Activated B cell treated with CpG ODN at 0.5 μM for 24 hours (primary cell): ENCODE measurements at regions of chr12 and their contacts with region 1.

Region 1: DNA sequence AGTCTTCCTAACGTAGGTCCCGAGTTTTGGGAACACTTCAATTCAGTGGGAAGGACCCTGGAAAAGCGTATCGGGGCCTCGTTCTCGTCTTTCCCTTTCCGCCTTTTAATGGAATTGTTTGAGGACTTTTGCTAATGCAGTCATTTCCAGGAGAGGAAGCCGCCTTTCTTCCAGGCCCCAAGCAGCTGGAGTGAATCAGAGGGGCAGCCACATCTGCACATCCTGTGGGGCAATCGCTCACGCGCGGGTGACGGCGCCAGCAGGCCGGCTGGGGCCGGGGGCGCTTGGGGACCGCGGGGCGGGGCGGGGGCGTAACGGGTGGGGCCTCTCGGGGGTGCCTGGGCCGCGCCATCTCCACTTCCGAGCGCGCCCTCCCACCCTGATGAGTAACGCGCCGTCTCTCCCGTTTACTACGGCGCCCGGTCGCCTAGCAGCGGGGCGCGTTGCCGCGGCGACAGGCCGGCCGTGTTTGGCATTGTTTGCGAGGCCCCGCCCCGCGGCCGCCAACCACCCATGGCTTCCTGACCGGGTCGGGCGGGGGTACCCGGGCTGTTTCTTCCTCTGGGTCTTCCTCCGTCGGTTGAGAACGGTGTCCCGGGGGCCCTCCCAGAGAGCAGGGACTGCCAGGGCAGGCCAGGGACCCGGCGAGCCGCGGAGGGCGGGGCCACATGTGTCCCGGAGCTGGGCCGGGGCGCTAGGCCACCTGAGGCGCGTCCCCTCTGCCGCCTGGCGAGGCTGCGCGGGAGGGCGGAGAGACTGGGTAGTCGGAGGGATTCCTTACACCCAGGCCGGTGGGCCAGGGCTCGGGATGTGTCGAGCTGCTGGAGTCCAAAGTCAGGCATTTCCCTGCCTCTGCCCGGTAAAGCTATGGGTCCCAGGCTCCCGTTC is 2.3 kb downstream of the GSG1 start:
- DNase-seq: peak; percentile 94
- ATAC-seq: peak; percentile 79
- H3K4me3 Mint-ChIP-seq: peak overlapping the region; percentile 83
- H3K27ac Mint-ChIP-seq: peak overlapping the region; percentile 96
- H3K4me1 Mint-ChIP-seq: peaks cover 63% of the 10 kb centered on the region
- H3K27me3 Mint-ChIP-seq: no peaks in the 10 kb centered on the region
- CTCF ChIP-seq: no peak

Region 2: DNA sequence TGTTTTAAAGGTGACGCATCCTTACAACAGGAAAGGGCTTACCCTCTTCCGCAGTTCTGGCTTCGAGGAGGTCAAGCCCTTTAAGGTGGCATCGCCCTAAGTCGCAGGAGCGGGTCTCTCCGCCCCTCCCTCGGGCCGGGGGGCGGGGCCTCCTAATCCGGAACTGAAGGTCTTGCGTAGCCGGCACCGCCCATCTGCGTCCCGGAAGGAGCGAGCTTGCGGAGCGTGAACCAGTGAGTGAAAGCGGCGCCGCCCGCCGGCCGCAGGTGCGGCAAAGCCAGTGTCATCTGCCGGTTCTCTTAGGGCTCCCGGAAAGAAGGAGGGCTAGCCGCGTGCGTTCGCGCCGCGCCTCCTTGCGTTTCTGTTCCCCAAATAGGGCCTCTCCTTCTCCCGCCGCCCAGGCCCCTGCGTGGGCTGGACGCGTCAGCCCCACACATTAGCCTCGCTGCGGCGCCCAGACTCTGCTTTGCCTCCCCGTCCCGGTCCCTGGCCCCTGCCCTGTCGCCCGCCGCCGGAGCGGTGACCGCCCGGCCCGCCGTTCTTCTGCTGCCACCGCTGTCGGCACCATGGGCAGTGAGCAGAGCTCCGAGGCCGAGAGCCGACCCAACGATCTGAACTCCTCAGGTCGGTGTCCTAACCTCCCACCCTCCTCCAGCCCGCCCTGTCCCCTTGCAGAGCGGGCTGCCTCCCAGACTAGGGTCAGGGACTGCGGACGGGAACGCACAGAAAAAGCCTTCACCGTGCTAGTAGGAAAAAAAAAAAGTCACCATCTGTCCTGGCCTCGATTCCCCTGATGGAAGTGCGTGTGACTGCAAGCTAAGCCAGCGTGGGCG is 744.0 kb before region 1 on chr12 and contains the start of gene BORCS5:
- CTCF ChIA-PET with region 1: no interaction called
- POLR2A ChIA-PET with region 1: no interaction called
- intact Hi-C with region 1: loop called (anchors 1 kb)
- DNase-seq: peak; percentile 99
- ATAC-seq: peak; percentile 90
- H3K4me3 Mint-ChIP-seq: peak within 1 kb of the TSS; percentile 92
- H3K27ac Mint-ChIP-seq: peak within 1 kb of the TSS; percentile 98
- H3K4me1 Mint-ChIP-seq: peaks cover 38% of the 10 kb centered on the region
- H3K27me3 Mint-ChIP-seq: no peaks in the 10 kb centered on the region
- CTCF ChIP-seq: no peak
- total RNA-seq, gene BORCS5: 19.5 and 22.7 TPM in 2 replicates

Region 3: DNA sequence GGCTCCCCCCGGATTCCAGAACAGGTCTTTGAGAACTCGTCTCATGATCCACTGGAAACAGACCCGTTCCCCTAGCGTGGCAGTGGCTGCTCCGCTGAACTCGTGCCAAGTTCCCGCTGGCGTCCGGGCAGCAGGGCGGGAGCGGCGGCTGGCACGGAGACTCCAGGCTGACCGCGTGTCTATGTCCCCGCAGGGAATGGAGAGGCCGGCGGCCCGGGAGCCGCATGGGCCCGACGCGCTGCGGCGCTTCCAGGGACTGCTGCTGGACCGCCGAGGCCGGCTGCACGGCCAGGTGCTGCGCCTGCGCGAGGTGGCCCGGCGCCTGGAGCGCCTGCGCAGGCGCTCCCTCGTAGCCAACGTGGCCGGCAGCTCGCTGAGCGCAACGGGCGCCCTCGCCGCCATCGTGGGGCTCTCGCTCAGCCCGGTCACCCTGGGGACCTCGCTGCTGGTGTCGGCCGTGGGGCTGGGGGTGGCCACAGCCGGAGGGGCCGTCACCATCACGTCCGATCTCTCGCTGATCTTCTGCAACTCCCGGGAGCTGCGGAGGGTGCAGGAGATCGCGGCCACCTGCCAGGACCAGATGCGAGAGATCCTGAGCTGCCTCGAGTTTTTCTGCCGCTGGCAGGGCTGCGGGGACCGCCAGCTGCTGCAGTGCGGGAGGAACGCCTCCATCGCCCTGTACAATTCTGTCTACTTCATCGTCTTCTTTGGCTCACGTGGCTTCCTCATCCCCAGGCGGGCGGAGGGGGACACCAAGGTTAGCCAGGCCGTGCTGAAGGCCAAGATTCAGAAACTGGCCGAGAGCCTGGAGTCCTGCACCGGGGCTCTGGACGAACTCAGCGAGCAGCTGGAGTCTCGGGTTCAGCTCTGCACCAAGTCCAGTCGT is 314.2 kb before region 1 on chr12:
- CTCF ChIA-PET with region 1: no interaction called
- POLR2A ChIA-PET with region 1: no interaction called
- intact Hi-C with region 1: loop called (anchors 1 kb)
- DNase-seq: peak; percentile 73
- ATAC-seq: peak; percentile 92
- H3K4me3 Mint-ChIP-seq: peak overlapping the region; percentile 87
- H3K27ac Mint-ChIP-seq: peak overlapping the region; percentile 86
- H3K4me1 Mint-ChIP-seq: peaks cover 23% of the 10 kb centered on the region
- H3K27me3 Mint-ChIP-seq: no peaks in the 10 kb centered on the region
- CTCF ChIP-seq: no peak

Region 4: DNA sequence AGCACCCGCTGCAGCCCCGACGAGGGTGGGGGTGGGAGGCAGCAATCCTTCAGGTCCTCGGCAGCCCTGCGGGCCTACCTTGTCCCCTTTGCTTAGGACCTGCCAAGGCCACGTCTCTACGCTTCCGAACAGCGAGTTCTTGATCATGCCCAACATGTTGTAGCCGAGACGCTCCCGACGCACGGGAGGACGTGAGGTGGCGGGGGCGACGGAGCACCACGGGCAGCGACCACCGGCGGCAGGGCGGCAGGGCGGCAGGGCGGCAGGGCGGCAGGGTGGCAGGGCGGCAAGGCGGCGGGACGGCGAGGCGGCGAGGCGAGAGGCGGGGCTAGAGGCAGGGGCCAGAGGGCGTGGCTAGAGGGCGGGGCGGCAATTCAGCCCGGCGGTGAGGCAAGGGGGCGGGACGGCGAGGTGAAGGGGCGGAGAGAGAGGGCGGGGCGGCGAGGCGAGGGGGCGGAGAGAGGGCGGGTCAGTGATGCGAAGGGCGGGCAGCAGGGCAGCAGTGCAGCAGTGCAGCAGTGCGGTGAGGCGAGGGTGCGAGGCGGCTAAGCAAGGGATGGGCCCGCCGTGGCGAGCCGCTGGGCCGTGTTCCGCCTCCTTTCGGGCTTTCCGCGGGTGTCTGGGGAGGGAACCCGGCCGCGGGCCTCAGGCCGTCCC is 101.0 kb before region 1 on chr12 and contains the start of gene HEBP1:
- CTCF ChIA-PET with region 1: no interaction called
- POLR2A ChIA-PET with region 1: no interaction called
- intact Hi-C with region 1: loop called (anchors 1 kb)
- DNase-seq: peak; percentile 97
- ATAC-seq: peak; percentile 92
- H3K4me3 Mint-ChIP-seq: peak within 1 kb of the TSS; percentile 87
- H3K27ac Mint-ChIP-seq: peak within 1 kb of the TSS; percentile 84
- H3K4me1 Mint-ChIP-seq: peaks cover 27% of the 10 kb centered on the region
- H3K27me3 Mint-ChIP-seq: no peaks in the 10 kb centered on the region
- CTCF ChIP-seq: no peak
- total RNA-seq, gene HEBP1: 9.7 and 12.0 TPM in 2 replicates

Region 5: DNA sequence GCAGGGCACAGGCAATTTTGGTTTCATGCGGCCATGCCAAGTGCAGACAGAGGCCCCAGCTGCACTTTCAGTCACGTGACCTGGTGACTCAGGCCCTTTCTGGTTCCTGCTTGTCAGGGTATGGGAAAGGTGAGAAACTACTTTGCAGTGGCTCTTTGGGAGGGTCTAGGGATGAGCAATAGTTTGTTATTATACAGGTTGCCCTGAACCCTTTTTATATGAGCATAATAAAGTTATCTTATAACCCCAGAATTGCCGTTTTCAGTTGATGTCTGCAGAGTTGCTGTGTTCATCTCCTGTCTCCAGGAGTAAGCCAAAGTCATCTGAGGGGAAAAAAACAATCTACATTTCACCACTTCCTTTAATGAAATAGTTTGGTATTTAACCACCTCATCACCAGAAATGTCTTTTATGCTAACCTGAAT is 64.5 kb after region 1 on chr12:
- CTCF ChIA-PET with region 1: no interaction called
- POLR2A ChIA-PET with region 1: no interaction called
- intact Hi-C with region 1: loop called (anchors 2 kb)
- DNase-seq: peak; percentile 30
- ATAC-seq: peak; percentile 94
- H3K4me3 Mint-ChIP-seq: no peak overlapping the region
- H3K27ac Mint-ChIP-seq: peak overlapping the region; percentile 22
- H3K4me1 Mint-ChIP-seq: peaks cover 17% of the 10 kb centered on the region
- H3K27me3 Mint-ChIP-seq: peaks cover 6% of the 10 kb centered on the region
- CTCF ChIP-seq: no peak

Region 6: DNA sequence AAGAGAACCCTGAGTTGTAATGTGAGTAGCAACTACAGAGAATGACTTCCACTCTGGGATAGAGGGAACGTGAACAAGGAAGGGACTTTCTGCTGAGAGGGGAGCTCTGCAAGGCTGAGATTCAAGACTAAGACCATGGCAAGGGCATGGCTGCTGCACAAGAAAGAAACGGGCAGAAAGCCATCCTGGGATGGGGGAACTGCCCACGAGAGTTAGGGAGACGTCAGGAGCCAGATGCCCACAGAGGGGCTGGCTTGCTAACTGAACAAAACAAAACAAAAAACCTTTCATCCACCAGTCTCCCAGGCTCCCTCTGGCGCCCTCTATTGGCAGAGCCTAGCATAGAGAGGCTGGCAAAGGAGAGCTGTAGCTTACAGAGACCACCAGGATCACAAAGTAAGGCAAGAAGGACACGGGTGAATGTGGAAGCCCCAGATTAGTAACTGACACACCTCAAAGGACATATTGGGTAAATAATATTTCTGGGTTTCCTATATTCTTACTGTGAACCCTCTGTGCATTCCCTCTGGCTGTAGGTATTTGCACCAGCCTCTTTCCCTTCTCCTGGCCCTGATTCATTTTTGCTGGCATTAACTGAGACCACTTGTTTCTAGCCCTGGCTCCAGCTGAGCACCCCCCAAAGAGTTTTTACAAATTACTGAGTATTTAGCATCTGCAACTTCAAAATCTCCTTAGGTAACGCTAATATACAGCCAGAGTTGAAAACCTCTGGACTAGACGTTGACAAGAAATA is 433.7 kb after region 1 on chr12:
- CTCF ChIA-PET with region 1: no interaction called
- POLR2A ChIA-PET with region 1: no interaction called
- intact Hi-C with region 1: loop called (anchors 2 kb)
- DNase-seq: peak; percentile 24
- ATAC-seq: no peak
- H3K4me3 Mint-ChIP-seq: no peak overlapping the region
- H3K27ac Mint-ChIP-seq: no peak overlapping the region
- H3K4me1 Mint-ChIP-seq: peaks cover 48% of the 10 kb centered on the region
- H3K27me3 Mint-ChIP-seq: no peaks in the 10 kb centered on the region
- CTCF ChIP-seq: no peak

Region 7: GRCh38 chr12:14960548-14961465 is 1859.7 kb after region 1 on chr12:
- CTCF ChIA-PET with region 1: no interaction called
- POLR2A ChIA-PET with region 1: no interaction called
- intact Hi-C with region 1: loop called (anchors 2 kb)
- DNase-seq: peak; percentile 41
- ATAC-seq: peak; percentile 59
- H3K4me3 Mint-ChIP-seq: peak overlapping the region; percentile 96
- H3K27ac Mint-ChIP-seq: peak overlapping the region; percentile 98
- H3K4me1 Mint-ChIP-seq: peaks cover 78% of the 10 kb centered on the region
- H3K27me3 Mint-ChIP-seq: no peaks in the 10 kb centered on the region
- CTCF ChIP-seq: no peak